Ovary (tissue), 10 donors: ENCODE measurements at regions of chr1 and their contacts with region 1.

Region 1: DNA sequence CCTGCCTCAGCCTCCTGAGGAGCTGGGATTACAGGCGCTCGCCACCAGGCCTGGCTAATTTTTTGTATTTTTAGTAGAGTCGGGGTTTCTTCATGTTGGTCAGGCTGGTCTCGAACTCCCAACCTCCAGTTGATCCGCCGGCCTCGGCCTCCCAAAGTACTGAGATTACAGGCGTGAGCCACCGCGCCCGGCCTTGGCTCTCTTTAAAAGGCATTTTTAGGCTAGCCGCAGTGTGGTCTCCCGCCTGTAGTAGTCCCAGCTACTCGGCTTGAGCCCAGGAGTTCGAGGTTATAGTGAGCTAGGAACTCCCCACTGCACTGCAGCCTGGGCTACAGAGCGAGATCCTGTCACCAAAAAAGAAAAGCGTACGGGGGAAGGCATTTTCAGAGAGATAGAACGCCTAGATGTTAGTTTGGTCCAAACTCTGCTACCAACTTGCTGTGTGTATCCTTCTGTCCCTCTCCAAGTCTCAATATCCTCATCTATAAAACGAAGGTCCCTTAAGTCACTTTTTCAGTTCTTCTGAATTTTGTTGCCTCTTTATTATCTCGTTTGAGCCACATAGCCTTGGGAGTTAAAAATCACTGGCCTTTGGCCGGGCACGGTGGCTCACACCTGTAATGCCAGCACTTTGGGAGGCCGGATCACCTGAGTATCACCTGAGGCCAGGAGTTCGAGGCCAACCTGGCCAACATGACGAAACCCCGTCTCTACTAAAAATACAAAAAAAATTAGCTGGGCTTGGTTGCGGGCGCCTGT is 734 bp downstream of the MED18 start:
- DNase-seq: peak; percentile 27 to 55 (median 34)
- H3K4me3 ChIP-seq: peak overlapping the region; percentile 40
- H3K27ac ChIP-seq: peak overlapping the region; percentile 56 to 66
- H3K4me1 ChIP-seq: no peaks in the 10 kb centered on the region
- H3K27me3 ChIP-seq: no peaks in the 10 kb centered on the region
- CTCF ChIP-seq: peak in 1 of 3 donors; percentile 9
- EP300 ChIP-seq: no peak
- POLR2A ChIP-seq: no peak

Region 2: DNA sequence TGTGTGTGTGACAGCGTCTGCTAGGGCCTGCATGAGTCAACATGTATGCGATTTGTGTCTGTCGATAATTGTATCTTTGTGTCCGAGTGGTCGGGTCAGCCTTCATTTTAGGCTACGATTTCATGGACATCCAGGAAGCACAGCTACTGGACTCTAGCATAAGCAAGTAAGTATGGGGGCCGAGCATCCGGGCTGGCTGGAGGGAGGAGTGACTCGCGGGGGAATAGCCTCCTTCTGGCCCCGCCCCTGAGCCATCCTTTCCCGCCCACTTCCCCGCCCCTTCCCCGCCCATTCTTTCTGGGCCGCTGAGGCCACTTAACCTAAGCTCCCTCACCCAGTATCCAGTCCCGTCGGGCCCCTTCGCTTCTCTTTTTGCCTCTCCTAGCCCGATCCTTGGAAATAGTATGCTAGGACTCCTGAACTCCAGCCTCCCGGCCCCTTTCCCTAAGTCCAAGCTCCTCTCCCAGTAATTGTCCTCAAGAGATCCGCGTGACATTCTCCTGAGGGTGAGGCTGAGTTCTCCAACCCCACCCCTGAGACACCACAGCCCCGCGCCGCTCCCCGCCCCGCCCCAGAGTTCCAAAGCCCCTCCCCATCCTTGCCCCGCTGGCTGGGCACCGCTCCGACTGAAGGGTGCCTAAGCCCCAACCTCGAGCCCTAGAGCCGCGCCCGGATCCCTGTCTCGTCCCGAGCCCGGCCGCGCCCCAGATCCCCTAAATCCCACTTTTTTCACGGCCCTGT is 964.0 kb before region 1 on chr1:
- intact Hi-C with region 1: no loop called
- DNase-seq: peak; percentile 89 to 93 (median 91)
- H3K4me3 ChIP-seq: peak overlapping the region; percentile 89
- H3K27ac ChIP-seq: peak overlapping the region; percentile 86 to 91
- H3K4me1 ChIP-seq: peaks cover 7% of the 10 kb centered on the region
- H3K27me3 ChIP-seq: no peaks in the 10 kb centered on the region
- CTCF ChIP-seq: no peak
- EP300 ChIP-seq: no peak
- POLR2A ChIP-seq: peak; percentile 71

Region 3: DNA sequence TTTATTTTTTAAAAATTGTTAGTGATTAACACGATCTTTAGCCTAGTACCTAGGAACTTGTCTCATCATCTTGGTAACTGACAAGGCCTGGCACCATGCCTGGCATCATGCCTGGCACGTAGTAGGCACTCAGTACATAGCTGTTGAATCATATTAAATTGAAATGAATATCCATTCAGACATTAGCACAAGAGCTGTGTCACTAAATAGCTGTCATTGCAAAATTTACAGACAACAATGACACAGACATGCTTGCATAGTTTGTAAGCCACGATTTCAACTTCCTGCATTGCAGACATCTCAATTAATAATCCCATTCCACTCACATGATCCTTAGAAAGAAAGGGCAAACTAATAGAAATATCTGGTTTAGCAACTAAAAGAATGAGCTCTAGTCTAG is 24.5 kb after region 1 on chr1:
- intact Hi-C with region 1: loop called in 1 of 4 experiments (anchors 2 kb)
- DNase-seq: no peak
- H3K4me3 ChIP-seq: no peak overlapping the region
- H3K27ac ChIP-seq: no peak overlapping the region
- H3K4me1 ChIP-seq: no peaks in the 10 kb centered on the region
- H3K27me3 ChIP-seq: no peaks in the 10 kb centered on the region
- CTCF ChIP-seq: no peak
- EP300 ChIP-seq: no peak
- POLR2A ChIP-seq: no peak